Activated CD8-positive, alpha-beta T cell treated with anti-CD3 and anti-CD28 coated beads for 36 hours (primary cell): ENCODE measurements at regions of chr2 and their contacts with region 1.

Region 1: DNA sequence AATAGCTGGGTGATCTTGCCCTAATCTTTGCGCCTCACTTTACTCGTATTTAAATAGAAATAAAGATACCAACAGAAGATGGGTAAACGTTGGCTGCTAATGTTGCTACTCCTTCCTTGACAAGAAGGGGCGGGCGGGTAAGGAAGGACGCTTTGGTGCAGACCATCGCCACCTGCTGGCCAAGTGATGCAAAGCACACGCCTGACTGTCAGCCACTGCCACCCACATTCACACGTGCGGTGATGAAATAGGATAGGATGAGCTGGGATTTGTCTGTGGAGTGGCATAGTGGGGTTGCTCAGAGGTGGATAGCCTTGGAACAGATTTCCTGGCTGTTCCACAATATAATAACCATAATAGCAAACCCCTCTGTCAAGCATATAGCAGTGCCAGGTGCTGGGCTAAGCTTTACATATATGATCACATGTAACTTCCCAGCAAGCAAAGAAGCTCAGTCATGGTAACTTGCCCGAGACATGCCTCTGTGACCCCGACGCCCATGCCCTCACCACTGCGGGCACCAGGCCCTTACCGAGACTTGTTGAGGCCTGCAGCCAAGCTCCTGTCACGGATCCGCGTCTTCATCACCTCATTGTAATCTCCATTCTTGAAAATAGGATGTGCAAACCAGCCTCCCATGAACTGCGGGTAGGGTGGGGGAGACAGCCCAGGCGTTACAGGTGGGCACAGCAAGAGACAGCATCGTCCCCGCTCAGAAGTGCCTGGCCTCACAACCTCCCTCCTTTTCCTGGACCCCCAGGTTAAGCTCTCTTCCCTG is 39.3 kb downstream of the LCT start:
- DNase-seq: peak; percentile 90
- ATAC-seq: peak; percentile 80
- H3K4me3 Mint-ChIP-seq: no peak overlapping the region
- H3K27ac Mint-ChIP-seq: peak overlapping the region; percentile 9
- H3K4me1 Mint-ChIP-seq: peaks cover 24% of the 10 kb centered on the region
- H3K27me3 Mint-ChIP-seq: no peaks in the 10 kb centered on the region
- CTCF ChIP-seq: peak; percentile 92

Region 2: DNA sequence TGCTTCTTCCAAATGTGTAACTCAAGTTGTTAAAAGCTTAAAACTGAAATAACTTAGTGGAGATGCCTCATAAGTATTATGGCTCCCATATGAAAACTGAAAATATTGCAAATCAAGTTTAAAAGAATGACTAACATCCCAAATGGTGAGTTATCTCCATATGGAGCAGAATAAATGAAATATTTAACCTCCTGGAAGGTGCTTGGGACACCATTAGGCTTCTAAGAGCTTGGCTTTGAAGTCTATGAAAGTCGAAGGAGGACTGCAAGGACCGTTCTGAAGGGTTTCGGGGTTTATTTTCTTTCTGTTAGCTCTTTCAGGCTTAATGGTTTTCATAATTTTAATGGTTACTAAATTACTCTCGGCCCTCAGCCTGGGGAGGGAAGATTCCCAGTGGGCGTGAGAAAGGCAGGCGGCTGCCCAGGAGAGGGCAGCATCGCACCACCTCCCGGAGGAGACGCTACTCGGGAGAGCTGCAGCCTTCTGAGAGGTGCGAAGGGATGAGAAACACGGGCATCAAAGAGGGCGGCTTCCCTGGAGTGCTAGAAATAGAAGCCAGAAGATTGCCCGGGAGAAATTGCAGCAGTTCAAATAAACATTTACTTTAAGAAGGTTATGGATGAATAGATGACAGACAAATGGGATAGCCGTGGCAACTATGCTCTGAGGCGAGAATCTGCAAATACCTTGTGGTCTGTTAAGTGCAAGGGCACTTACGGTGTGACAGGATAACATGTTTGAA is 793.5 kb before region 1 on chr2:
- CTCF ChIA-PET with region 1: interaction called, 10 read pairs
- POLR2A ChIA-PET with region 1: no interaction called
- intact Hi-C with region 1: no loop called
- DNase-seq: peak; percentile 79
- ATAC-seq: peak; percentile 96
- H3K4me3 Mint-ChIP-seq: no peak overlapping the region
- H3K27ac Mint-ChIP-seq: no peak overlapping the region
- H3K4me1 Mint-ChIP-seq: peaks cover 5% of the 10 kb centered on the region
- H3K27me3 Mint-ChIP-seq: peaks cover 8% of the 10 kb centered on the region
- CTCF ChIP-seq: peak; percentile 94

Region 3: GRCh38 chr2:135756692-135757091 is 41.0 kb before region 1 on chr2:
- CTCF ChIA-PET with region 1: interaction called, 20 read pairs
- POLR2A ChIA-PET with region 1: no interaction called
- intact Hi-C with region 1: no loop called
- DNase-seq: no peak
- ATAC-seq: no peak
- H3K4me3 Mint-ChIP-seq: no peak overlapping the region
- H3K27ac Mint-ChIP-seq: no peak overlapping the region
- H3K4me1 Mint-ChIP-seq: peaks cover 11% of the 10 kb centered on the region
- H3K27me3 Mint-ChIP-seq: no peaks in the 10 kb centered on the region
- CTCF ChIP-seq: no peak

Region 4: DNA sequence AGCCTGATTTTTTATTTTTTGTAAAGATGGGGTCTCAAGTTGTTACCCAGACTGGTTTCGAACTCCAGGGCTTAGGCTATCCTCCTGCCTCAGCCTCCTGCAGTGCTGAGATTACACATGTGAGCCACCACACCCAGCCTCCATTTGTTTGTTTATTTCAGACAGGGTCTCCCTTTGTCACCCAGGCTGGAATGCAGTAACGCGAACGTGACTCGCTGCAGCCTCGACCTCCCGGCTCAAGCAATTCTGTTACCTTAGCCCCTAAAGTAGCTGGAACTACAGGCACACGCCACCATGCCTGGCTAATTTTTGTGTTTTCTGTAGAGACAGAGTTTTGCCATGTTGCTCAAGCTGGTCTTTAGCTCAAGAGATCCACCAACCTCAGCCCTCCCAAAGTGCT is 28.8 kb before region 1 on chr2:
- CTCF ChIA-PET with region 1: interaction called, 11 read pairs
- POLR2A ChIA-PET with region 1: interaction called, 6 read pairs
- intact Hi-C with region 1: no loop called
- DNase-seq: no peak
- ATAC-seq: no peak
- H3K4me3 Mint-ChIP-seq: no peak overlapping the region
- H3K27ac Mint-ChIP-seq: no peak overlapping the region
- H3K4me1 Mint-ChIP-seq: peaks cover 16% of the 10 kb centered on the region
- H3K27me3 Mint-ChIP-seq: no peaks in the 10 kb centered on the region
- CTCF ChIP-seq: no peak

Region 5: DNA sequence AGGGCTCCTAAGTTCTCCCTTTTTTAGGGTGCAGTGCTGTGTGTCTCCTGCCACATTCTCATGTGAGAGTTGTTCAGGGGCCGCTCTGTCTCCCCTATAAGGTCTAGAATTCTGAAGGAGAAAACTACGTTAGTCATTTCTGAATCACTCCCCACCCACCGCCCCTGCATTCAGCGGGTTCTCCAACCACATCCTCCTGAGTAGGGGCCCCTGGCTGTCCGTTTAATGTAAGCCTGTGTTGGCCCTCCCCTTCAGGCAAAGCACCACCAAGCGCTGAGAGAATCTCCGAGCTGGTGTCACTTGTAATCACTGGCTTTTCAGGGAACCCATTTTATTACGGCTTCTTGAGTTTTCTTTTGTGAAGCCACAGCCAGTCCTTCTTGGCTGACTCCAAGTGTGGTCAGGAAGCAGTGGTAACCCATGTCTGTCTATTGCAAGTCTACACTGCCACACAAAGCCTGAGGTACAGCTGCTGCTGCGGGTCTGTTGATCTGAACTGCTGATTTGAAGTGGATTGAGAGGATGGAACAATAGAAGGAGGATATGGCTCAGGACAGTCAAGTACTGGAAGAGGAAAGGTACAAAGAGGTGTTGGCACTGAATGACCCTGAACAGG is 22.4 kb after region 1 on chr2:
- CTCF ChIA-PET with region 1: interaction called, 145 read pairs
- POLR2A ChIA-PET with region 1: interaction called, 6 read pairs
- intact Hi-C with region 1: no loop called
- DNase-seq: peak; percentile 98
- ATAC-seq: peak; percentile 93
- H3K4me3 Mint-ChIP-seq: peak overlapping the region; percentile 68
- H3K27ac Mint-ChIP-seq: peak overlapping the region; percentile 91
- H3K4me1 Mint-ChIP-seq: peaks cover 56% of the 10 kb centered on the region
- H3K27me3 Mint-ChIP-seq: no peaks in the 10 kb centered on the region
- CTCF ChIP-seq: no peak

Region 6: GRCh38 chr2:135839713-135840112 is 42.0 kb after region 1 on chr2:
- CTCF ChIA-PET with region 1: interaction called, 11 read pairs
- POLR2A ChIA-PET with region 1: no interaction called
- intact Hi-C with region 1: no loop called
- DNase-seq: no peak
- ATAC-seq: peak; percentile 32
- H3K4me3 Mint-ChIP-seq: no peak overlapping the region
- H3K27ac Mint-ChIP-seq: no peak overlapping the region
- H3K4me1 Mint-ChIP-seq: peaks cover 35% of the 10 kb centered on the region
- H3K27me3 Mint-ChIP-seq: no peaks in the 10 kb centered on the region
- CTCF ChIP-seq: no peak

Region 7: DNA sequence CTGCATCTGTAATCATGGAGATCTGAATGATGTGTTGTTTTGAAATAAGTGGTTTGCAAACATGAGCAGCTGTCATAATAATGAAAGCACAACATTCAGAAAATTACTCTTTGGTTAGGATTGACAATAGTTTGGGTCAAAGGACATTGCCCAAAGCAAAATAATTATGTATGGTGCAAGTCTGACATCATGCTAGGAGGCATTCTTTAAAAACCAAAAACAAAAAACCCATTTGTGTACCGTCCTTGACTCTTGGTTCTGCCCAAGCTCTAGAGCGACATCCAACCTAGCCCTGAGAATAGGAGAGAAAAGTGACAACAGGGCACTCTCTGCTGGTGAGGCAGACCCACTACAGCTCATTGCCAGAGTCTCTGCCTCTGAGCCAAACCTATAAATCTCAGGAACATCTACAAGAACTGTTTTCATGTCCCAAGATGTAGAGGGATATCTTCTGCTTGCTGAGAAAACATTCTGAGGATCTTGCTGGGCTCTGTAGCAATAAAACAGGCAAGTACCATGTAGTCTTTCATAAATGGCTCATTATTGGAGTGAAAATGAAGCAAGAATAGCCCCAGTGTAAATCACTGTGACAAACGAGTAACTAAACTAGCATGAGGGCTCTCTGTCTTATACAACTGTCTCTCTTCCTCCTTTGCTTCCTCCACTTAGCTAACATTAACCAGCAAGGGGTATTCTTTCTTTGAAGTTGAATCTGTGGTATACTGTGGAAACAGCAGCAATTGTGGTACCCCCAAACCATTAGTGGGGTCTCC is 587.0 kb after region 1 on chr2:
- CTCF ChIA-PET with region 1: interaction called, 18 read pairs
- POLR2A ChIA-PET with region 1: no interaction called
- intact Hi-C with region 1: no loop called
- DNase-seq: peak; percentile 61
- ATAC-seq: peak; percentile 50
- H3K4me3 Mint-ChIP-seq: no peak overlapping the region
- H3K27ac Mint-ChIP-seq: peak overlapping the region; percentile 35
- H3K4me1 Mint-ChIP-seq: peaks cover 43% of the 10 kb centered on the region
- H3K27me3 Mint-ChIP-seq: no peaks in the 10 kb centered on the region
- CTCF ChIP-seq: peak; percentile 89